ENCODE measurements at regions of chr22 and their contacts with region 1.

Region 1: GRCh38 chr22:20741634-20742581 is 32.0 kb upstream of the SERPIND1 start:
- DNase-seq: peak in 1 of 2 donors; percentile 68
- ATAC-seq: no peak
- H3K4me3 ChIP-seq: no peak overlapping the region
- H3K4me3 Mint-ChIP-seq: no peak overlapping the region
- H3K27ac ChIP-seq: no peak overlapping the region
- H3K27ac Mint-ChIP-seq: no peak overlapping the region
- H3K4me1 ChIP-seq: no peaks in the 10 kb centered on the region
- H3K4me1 Mint-ChIP-seq: peaks cover 5 to 6% of the 10 kb centered on the region in 2 donors
- H3K27me3 ChIP-seq: no peaks in the 10 kb centered on the region
- H3K27me3 Mint-ChIP-seq: no peaks in the 10 kb centered on the region
- CTCF ChIP-seq: peak; percentile 77

Region 2: DNA sequence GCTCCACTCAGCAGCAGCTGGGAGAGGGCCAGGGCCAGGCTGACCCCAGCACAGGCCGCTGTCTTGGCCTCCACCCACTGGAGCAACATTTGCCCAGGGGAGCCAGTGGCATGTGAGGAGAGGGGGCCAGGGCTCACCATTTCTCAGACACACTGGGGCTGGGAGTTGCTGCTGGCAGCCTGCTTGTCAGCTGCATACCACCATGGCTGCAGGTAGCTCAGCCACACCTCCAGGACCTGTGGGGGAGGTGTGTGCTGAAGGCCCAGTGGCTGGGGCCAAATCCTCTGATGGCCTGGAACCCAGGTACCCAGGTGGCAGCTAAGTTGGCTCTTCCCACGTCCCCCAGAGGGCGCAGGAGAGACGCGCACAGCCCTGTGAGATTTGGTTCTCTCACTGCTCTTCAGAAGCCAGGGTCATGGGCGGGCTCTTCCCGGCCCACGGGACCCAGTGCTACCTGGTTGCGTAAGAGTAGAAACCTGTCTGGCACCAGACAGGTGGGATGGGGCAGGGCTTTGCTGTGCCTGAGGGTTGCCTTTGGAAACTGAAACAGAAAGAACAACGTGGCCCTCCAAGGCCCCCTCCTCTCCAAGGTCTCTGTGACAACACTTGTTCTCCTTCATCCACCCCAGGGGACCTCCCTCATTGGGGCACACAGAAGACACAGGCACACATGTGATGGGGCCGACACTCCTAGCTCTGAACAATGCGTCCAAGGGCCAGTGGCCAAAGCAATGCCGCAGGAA is 135.7 kb before region 1 on chr22:
- intact Hi-C with region 1: loop called (anchors 2 kb)
- DNase-seq: peak; percentile 59 to 86
- ATAC-seq: peak; percentile 61 to 73 (median 71)
- H3K4me3 ChIP-seq: no peak overlapping the region
- H3K4me3 Mint-ChIP-seq: peak overlapping the region; percentile 67
- H3K27ac ChIP-seq: peak overlapping the region; percentile 48
- H3K27ac Mint-ChIP-seq: peak overlapping the region; percentile 66 to 92
- H3K4me1 ChIP-seq: peaks cover 61% of the 10 kb centered on the region
- H3K4me1 Mint-ChIP-seq: peaks cover 43 to 63% of the 10 kb centered on the region in 2 donors
- H3K27me3 ChIP-seq: no peaks in the 10 kb centered on the region
- H3K27me3 Mint-ChIP-seq: no peaks in the 10 kb centered on the region
- CTCF ChIP-seq: peak; percentile 89